Endothelial cell of umbilical vein (primary cell): ENCODE measurements at regions of chr19 and their contacts with region 1.

Region 1: DNA sequence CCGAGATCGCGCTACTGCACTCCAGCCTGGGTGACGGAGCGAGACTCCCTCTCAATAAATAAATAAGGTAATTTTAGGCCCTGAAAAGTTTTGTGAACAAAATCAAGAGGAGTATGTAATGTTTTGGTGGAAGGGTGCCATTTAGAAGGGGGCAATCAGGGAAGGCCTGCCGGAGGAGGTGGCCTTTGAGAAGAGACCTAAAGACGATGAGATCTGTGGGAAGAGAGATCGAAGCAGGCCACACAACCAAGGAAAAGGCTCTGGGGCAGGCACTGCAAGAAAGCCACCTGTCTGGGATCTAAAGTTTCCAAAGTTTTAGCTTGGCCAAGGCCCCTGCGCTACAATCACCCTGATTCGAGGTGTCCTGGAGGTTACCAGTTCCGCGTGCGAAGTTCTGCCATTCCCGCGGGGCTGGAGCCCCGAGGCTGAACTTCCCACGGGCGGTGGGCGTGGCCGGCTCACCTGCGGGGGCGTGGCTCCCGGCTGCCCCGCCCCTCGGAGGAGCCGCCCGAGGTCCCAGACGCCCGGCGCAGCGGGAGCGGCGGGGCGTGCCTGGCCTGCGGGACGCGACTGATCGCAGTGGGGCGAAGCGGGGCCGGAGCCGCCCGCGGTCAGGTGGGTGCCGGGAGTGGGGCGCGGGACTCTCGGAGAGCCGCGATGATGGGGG is at the start of gene KLC3:
- DNase-seq: no peak
- H3K4me3 ChIP-seq: no peak within 1 kb of the TSS
- H3K27ac ChIP-seq: no peak within 1 kb of the TSS
- H3K4me1 ChIP-seq: peaks cover 5% of the 10 kb centered on the region
- H3K27me3 ChIP-seq: peaks cover 5% of the 10 kb centered on the region in 2 experiments
- CTCF ChIP-seq: no peak
- POLR2A ChIP-seq: no peak
- total RNA-seq, gene KLC3: not detected in 2 replicates

Region 2: GRCh38 chr19:45016388-45017319 is 323.7 kb before region 1 on chr19:
- CTCF ChIA-PET with region 1: interaction called, 4 read pairs
- POLR2A ChIA-PET with region 1: no interaction called
- dilution Hi-C with region 1: no loop called
- intact Hi-C with region 1: loop called (anchors 1 kb)
- DNase-seq: peak; percentile 74
- H3K4me3 ChIP-seq: no peak overlapping the region
- H3K27ac ChIP-seq: no peak overlapping the region
- H3K4me1 ChIP-seq: no peaks in the 10 kb centered on the region
- H3K27me3 ChIP-seq: no peaks in the 10 kb centered on the region
- CTCF ChIP-seq: peak; percentile 70 to 76
- POLR2A ChIP-seq: no peak

Region 3: DNA sequence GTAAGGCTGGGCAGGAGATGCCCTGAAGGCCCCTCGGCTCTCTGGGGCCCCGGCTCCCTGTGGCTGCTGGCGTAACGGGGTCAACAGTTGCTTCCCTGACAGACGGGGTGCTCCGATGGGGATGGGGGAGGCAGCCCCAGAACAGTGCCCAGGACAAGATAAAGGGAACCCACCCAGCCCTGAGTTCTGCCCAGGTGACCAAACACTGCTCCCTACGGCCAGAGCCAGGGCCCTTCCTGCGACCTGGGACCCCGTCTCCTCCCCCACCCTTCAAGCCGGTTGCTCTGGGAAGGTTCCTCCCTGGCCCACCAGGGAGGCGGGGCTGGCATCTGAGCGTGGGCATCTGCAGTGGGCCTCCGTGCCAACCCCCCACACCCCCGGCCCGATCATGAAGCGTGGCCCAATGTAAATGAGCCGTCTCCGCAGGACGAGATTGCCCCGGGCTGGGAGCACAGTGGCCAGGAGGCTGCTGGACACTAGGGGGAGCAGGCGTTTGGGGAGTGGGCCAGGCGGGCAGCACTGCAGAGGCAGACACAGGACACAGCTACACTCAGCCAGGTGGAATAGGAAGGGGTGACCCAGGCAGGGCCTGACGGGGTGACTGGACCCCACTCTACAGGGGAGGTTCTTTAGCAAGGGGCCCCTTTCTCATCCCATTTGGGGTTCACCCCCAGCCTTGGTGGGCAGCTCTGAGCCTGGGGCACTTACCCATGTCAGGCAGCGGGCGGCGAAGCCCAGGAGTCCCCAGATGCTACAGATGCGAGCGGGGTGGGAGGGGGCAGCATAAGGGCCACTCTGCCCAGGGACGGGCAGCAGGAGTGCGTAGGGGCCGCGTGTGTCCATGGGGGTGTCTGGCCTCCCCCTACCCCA is 178.4 kb before region 1 on chr19:
- CTCF ChIA-PET with region 1: interaction called, 10 read pairs
- POLR2A ChIA-PET with region 1: no interaction called
- dilution Hi-C with region 1: no loop called
- intact Hi-C with region 1: loop called (anchors 2 kb)
- DNase-seq: peak; percentile 50
- H3K4me3 ChIP-seq: no peak overlapping the region
- H3K27ac ChIP-seq: no peak overlapping the region
- H3K4me1 ChIP-seq: peaks cover 6% of the 10 kb centered on the region
- H3K27me3 ChIP-seq: no peaks in the 10 kb centered on the region
- CTCF ChIP-seq: peak; percentile 61 to 90
- POLR2A ChIP-seq: no peak

Region 4: DNA sequence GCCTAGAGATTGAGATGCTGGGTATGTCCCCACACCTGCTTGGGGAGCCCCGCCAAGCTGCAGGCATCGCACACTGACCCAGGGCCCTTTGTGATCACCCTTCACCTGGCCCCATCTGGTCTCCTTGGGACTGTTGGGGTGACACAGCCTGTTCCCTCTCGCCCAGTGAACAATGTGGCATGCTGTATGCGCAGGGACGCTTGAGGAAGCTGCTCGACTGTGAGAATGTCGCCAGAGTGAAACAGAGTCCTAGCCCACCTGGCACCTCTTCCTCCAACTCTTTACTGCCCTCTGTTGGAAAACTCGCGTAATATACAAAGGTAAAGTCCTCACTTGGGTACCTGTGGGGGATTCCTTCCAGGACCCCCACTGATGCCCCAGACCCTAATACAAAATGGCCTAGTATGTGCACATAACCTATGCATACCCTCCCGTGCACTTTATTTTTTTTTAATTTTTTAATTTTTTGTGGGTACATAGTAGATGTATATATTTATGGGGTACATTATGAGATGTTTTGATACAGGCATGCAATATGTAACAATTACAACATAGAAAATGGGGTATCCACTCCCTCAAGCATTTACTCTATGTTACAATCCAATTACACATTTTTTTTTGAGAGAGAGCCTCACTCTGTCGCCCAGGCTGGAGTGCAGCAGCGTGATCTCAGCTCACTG is 152.8 kb before region 1 on chr19:
- CTCF ChIA-PET with region 1: no interaction called
- POLR2A ChIA-PET with region 1: no interaction called
- dilution Hi-C with region 1: no loop called
- intact Hi-C with region 1: loop called (anchors 5 kb)
- DNase-seq: no peak
- H3K4me3 ChIP-seq: no peak overlapping the region
- H3K27ac ChIP-seq: no peak overlapping the region
- H3K4me1 ChIP-seq: no peaks in the 10 kb centered on the region
- H3K27me3 ChIP-seq: no peaks in the 10 kb centered on the region
- CTCF ChIP-seq: peak; percentile 53 to 61
- POLR2A ChIP-seq: no peak

Region 5: GRCh38 chr19:45200568-45200994 is 139.8 kb before region 1 on chr19:
- CTCF ChIA-PET with region 1: interaction called, 76 read pairs
- POLR2A ChIA-PET with region 1: no interaction called
- dilution Hi-C with region 1: no loop called
- intact Hi-C with region 1: loop called (anchors 1 kb)
- DNase-seq: peak; percentile 73
- H3K4me3 ChIP-seq: no peak overlapping the region
- H3K27ac ChIP-seq: no peak overlapping the region
- H3K4me1 ChIP-seq: peaks cover 4% of the 10 kb centered on the region
- H3K27me3 ChIP-seq: no peaks in the 10 kb centered on the region
- CTCF ChIP-seq: peak; percentile 52 to 60
- POLR2A ChIP-seq: no peak

Region 6: DNA sequence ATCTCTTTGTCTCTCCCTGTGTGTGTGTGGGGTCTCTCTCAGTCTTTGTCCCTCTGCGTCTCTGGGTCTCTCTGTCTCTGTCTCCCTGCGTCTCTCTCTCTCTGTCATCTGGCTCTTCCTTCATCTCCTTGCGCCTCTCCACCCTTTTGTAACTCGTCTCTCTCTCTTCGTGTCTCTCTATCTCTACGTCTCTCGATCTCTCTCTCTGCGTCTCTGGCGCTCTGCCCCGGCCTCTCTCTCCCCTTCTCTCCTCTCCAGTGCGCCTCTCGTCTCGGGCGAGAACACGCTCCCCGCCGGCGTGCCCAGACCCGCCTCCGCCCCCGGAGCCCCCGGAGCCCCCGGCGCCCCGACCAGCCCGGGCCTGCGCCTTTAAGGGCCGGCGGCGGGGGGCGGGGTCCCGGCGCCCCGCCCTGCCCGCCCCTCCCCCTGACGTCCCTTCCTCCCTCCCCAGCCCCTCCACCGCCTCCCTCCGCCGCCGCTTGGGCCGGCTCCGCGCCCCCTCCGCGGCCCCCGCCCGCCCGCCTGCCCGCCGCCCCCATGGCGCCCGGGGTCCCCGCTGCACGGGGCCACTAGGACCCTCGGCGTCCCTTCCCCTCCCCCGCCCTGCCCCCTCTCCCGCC is 89.4 kb before region 1 on chr19 and contains the start of gene MARK4:
- CTCF ChIA-PET with region 1: interaction called, 7 read pairs
- POLR2A ChIA-PET with region 1: no interaction called
- dilution Hi-C with region 1: no loop called
- intact Hi-C with region 1: loop called (anchors 1 kb)
- DNase-seq: peak; percentile 44
- H3K4me3 ChIP-seq: peak within 1 kb of the TSS; percentile 70 to 94 (median 86)
- H3K27ac ChIP-seq: peak within 1 kb of the TSS; percentile 20
- H3K4me1 ChIP-seq: peaks cover 13% of the 10 kb centered on the region
- H3K27me3 ChIP-seq: no peaks in the 10 kb centered on the region
- CTCF ChIP-seq: no peak
- POLR2A ChIP-seq: peak; percentile 36
- total RNA-seq, gene MARK4: 50.0 and 51.6 TPM in 2 replicates

Region 7: GRCh38 chr19:45323671-45324081 is 16.7 kb before region 1 on chr19:
- CTCF ChIA-PET with region 1: interaction called, 10 read pairs
- POLR2A ChIA-PET with region 1: no interaction called
- dilution Hi-C with region 1: no loop called
- intact Hi-C with region 1: no loop called
- DNase-seq: no peak
- H3K4me3 ChIP-seq: peak overlapping the region in 1 of 3 experiments; percentile 4
- H3K27ac ChIP-seq: no peak overlapping the region
- H3K4me1 ChIP-seq: no peaks in the 10 kb centered on the region
- H3K27me3 ChIP-seq: peaks cover 4 to 5% of the 10 kb centered on the region in 2 experiments
- CTCF ChIP-seq: no peak
- POLR2A ChIP-seq: no peak

Region 8: GRCh38 chr19:45409557-45409920 is 69.2 kb after region 1 on chr19:
- CTCF ChIA-PET with region 1: no interaction called
- POLR2A ChIA-PET with region 1: no interaction called
- dilution Hi-C with region 1: no loop called
- intact Hi-C with region 1: no loop called
- DNase-seq: no peak
- H3K4me3 ChIP-seq: no peak overlapping the region
- H3K27ac ChIP-seq: no peak overlapping the region
- H3K4me1 ChIP-seq: peaks cover 6% of the 10 kb centered on the region
- H3K27me3 ChIP-seq: no peaks in the 10 kb centered on the region
- CTCF ChIP-seq: no peak
- POLR2A ChIP-seq: peak; percentile 49